ENCODE measurements at regions of chr5 and their contacts with region 1.

Region 1: DNA sequence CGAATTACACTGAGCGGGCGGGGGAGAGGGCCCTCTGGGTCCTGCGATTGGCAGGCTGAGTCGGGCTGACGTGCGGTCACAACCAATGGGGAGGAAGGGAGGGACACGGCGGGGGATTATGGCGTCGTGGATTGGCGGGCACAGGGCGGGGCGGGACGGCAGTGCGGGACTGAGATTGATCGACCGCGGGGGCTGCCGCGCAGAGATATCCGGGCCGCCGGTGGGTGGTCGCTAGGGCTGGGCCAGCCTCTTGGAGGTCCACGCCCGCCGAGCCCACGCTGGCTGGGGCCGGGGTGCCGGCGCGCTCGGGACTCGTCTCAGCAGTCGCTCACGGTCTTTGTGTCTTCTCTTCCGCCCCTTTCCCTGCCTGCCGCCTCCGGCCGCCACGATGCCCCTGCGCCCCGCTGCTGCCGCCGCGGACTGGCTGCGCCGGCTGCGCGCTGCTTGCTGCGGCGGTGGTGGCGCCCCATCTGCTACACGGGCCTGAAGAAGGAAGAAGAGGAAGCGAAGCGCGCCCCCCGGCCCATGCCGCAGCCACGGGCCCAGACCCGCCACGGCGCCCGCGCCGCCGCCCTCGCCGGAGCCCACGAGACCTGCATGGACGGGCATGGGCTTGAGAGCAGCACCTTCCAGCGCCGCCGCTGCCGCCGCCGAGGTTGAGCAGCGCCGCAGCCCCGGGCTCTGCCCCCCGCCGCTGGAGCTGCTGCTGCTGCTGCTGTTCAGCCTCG is at the start of gene RGMB:
- DNase-seq: peak; percentile 99
- ATAC-seq: peak; percentile 69
- H3K4me3 ChIP-seq: peak within 1 kb of the TSS; percentile 89
- H3K27ac ChIP-seq: peak within 1 kb of the TSS; percentile 83
- H3K4me1 ChIP-seq: peaks cover 30% of the 10 kb centered on the region
- H3K27me3 ChIP-seq: no peaks in the 10 kb centered on the region
- CTCF ChIP-seq: no peak
- total RNA-seq, gene RGMB: 31.1 and 37.3 TPM in 2 replicates

Region 2: GRCh38 chr5:97183100-97183929 is 1590.3 kb before region 1 on chr5 and contains the start of gene RIOK2:
- CTCF ChIA-PET with region 1: interaction called, 5 read pairs
- POLR2A ChIA-PET with region 1: no interaction called
- intact Hi-C with region 1: loop called (anchors 2 kb)
- DNase-seq: peak; percentile 95
- ATAC-seq: peak; percentile 90
- H3K4me3 ChIP-seq: peak within 1 kb of the TSS; percentile 84
- H3K27ac ChIP-seq: peak within 1 kb of the TSS; percentile 85
- H3K4me1 ChIP-seq: peaks cover 14% of the 10 kb centered on the region
- H3K27me3 ChIP-seq: no peaks in the 10 kb centered on the region
- CTCF ChIP-seq: no peak
- total RNA-seq, gene RIOK2: 16.1 and 22.3 TPM in 2 replicates

Region 3: GRCh38 chr5:97534166-97534565 is 1239.5 kb before region 1 on chr5:
- CTCF ChIA-PET with region 1: no interaction called
- POLR2A ChIA-PET with region 1: no interaction called
- intact Hi-C with region 1: loop called (anchors 5 kb)
- DNase-seq: peak; percentile 88
- ATAC-seq: peak; percentile 92
- H3K4me3 ChIP-seq: no peak overlapping the region
- H3K27ac ChIP-seq: peak overlapping the region; percentile 26
- H3K4me1 ChIP-seq: peaks cover 10% of the 10 kb centered on the region
- H3K27me3 ChIP-seq: no peaks in the 10 kb centered on the region
- CTCF ChIP-seq: peak; percentile 82

Region 4: GRCh38 chr5:98109561-98110006 is 664.0 kb before region 1 on chr5:
- CTCF ChIA-PET with region 1: no interaction called
- POLR2A ChIA-PET with region 1: no interaction called
- intact Hi-C with region 1: loop called (anchors 10 kb)
- DNase-seq: peak; percentile 93
- ATAC-seq: peak; percentile 69
- H3K4me3 ChIP-seq: peak overlapping the region; percentile 21; the same call in 1 of the 2 replicates
- H3K27ac ChIP-seq: peak overlapping the region; percentile 97
- H3K4me1 ChIP-seq: peaks cover 49% of the 10 kb centered on the region
- H3K27me3 ChIP-seq: no peaks in the 10 kb centered on the region
- CTCF ChIP-seq: no peak

Region 5: DNA sequence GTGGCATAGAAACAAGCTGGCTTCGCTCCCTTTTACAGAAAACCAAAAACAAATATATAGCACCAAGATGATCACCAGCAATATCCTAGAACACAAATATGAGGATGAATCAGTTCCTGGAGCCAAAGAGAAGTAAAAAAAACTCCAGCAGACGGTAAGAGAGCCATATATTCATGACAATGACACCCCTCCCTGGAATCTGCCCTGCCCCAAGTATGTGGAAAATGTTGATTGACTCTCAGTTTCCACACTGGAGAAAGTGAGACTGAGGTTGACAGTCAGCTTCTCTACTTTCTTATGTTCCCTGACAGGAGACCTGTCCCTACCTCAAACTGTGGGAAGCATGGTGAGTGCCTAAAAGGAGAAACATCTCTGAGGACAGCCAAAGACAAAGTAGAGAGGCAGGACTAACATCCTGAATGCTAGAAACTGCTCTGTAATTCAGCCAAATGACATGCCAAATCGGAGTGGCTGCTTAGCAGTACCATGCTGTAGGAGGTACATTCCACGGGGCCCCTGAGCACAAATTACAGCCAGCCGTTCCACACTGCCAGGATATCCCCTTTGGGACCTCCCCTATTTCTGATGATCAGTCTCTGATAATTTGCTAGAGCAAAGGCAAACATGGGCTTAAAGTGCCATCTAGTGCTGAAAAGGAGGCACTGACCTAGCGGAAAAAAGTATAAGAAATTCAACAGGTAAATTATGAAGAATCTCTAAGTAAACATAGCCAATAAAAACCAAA is 424.2 kb before region 1 on chr5:
- CTCF ChIA-PET with region 1: no interaction called
- POLR2A ChIA-PET with region 1: no interaction called
- intact Hi-C with region 1: loop called (anchors 1 kb)
- DNase-seq: peak; percentile 94
- ATAC-seq: peak; percentile 94
- H3K4me3 ChIP-seq: peak overlapping the region; percentile 34; the same call in 1 of the 2 replicates
- H3K27ac ChIP-seq: peak overlapping the region; percentile 90
- H3K4me1 ChIP-seq: peaks cover 5% of the 10 kb centered on the region; the same call in 1 of the 2 replicates
- H3K27me3 ChIP-seq: no peaks in the 10 kb centered on the region
- CTCF ChIP-seq: peak; percentile 99

Region 6: DNA sequence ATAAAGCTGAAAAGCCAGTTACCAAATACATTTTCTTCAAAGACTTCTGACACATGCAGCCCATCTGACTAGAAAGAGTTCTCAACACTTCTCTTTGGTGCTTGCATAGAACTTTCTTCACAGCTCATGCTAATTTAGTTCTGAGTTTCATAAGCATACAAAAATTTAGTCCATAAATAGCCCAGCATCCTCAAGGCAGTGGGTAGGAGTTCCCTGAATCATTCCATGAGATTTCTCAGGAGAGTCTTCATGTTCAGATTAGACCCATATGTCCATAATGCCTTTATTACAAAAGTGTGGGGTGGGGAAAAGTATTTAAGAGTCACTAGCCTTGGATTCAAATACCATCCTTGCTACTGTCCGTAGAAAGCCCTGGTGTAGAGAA is 290.3 kb before region 1 on chr5:
- CTCF ChIA-PET with region 1: no interaction called
- POLR2A ChIA-PET with region 1: interaction called, 14 read pairs
- intact Hi-C with region 1: no loop called
- DNase-seq: no peak
- ATAC-seq: no peak
- H3K4me3 ChIP-seq: no peak overlapping the region
- H3K27ac ChIP-seq: no peak overlapping the region
- H3K4me1 ChIP-seq: no peaks in the 10 kb centered on the region
- H3K27me3 ChIP-seq: no peaks in the 10 kb centered on the region
- CTCF ChIP-seq: no peak

Region 7: DNA sequence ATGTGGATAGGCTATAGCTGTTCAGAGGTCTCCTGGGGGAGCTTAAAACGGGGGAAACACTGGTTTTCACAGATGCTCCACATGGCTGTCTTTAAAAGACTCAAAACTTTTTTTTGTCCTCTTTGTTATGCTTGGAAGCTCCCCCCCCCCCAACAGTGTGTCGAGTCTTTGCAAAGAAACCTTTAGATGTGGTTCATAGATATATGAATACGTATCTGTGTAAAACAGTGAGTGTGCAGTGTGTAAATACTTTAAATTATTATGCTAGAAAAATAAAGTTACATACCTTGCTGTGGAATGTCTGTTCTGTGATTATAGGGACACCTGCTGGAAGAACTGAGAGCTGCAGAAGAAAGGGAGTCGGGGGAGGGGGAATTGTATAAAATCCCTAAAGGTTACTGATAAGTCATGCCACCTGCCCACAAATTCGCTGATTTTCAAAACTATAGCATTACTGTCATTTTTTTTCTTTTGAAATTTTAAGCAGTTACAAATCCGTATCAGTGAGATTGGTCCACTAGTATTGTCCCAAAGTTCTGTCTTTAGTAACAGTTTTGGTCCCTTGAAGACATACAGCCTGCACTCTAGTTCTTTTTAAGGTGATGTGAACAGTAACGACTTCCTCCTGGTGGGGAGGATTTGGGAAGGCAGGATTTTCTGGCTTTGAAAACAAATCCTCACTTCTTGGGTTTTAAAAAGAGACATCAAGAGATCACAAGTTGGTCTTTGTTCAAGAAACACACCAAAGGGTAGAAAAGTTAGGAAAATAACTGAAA is 22.8 kb after region 1 on chr5:
- CTCF ChIA-PET with region 1: interaction called, 21 read pairs
- POLR2A ChIA-PET with region 1: interaction called, 5 read pairs
- intact Hi-C with region 1: loop called (anchors 1 kb)
- DNase-seq: peak; percentile 90
- ATAC-seq: peak; percentile 98
- H3K4me3 ChIP-seq: peak overlapping the region; percentile 16; the same call in 1 of the 2 replicates
- H3K27ac ChIP-seq: peak overlapping the region; percentile 33
- H3K4me1 ChIP-seq: peaks cover 12% of the 10 kb centered on the region
- H3K27me3 ChIP-seq: no peaks in the 10 kb centered on the region
- CTCF ChIP-seq: peak; percentile 93